A549 (cell line): ENCODE measurements at regions of chr5 and their contacts with region 1.

Region 1: DNA sequence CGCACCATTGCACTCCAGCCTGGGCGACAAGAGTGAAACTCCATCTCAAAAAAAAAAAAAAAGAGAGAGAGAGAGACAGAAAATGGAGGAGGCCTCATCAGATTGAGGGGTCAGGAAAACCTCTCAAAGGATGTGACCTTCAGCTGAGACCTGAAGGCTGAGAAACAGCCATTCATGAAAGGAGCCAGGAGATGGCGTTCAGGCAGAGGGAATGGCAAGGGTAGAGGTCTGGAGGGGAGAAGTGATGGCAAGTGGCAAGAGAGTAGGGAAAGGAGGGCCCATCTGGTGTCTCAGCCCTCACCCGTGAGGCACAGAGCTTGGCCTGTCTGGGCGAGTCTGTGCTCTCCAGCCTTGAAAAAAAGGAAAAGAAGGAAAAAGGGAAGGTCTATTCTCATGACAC is 17.0 kb downstream of the CAMK2A start:
- DNase-seq: peak; percentile 57 to 59
- ATAC-seq: peak; percentile 74 to 91
- H3K4me3 ChIP-seq: no peak overlapping the region
- H3K27ac ChIP-seq: peak overlapping the region in 1 of 2 experiments; percentile 51; a peak in 1 of 6 replicates
- H3K4me1 ChIP-seq: peaks cover 10% of the 10 kb centered on the region; the same call in 2 of the 3 replicates
- CTCF ChIP-seq: peak; percentile 54
- EP300 ChIP-seq: no peak
- POLR2A ChIP-seq: no peak
- RAD21 ChIP-seq: peak; percentile 76 to 92

Region 2: GRCh38 chr5:149824114-149824513 is 448.4 kb before region 1 on chr5:
- CTCF ChIA-PET with region 1: no interaction called
- POLR2A ChIA-PET with region 1: no interaction called
- DNase-seq: no peak
- ATAC-seq: no peak
- H3K4me3 ChIP-seq: no peak overlapping the region
- H3K27ac ChIP-seq: no peak overlapping the region
- H3K4me1 ChIP-seq: peaks cover 5% of the 10 kb centered on the region; the same call in 1 of the 3 replicates
- CTCF ChIP-seq: no peak
- EP300 ChIP-seq: no peak
- POLR2A ChIP-seq: no peak
- RAD21 ChIP-seq: no peak

Region 3: DNA sequence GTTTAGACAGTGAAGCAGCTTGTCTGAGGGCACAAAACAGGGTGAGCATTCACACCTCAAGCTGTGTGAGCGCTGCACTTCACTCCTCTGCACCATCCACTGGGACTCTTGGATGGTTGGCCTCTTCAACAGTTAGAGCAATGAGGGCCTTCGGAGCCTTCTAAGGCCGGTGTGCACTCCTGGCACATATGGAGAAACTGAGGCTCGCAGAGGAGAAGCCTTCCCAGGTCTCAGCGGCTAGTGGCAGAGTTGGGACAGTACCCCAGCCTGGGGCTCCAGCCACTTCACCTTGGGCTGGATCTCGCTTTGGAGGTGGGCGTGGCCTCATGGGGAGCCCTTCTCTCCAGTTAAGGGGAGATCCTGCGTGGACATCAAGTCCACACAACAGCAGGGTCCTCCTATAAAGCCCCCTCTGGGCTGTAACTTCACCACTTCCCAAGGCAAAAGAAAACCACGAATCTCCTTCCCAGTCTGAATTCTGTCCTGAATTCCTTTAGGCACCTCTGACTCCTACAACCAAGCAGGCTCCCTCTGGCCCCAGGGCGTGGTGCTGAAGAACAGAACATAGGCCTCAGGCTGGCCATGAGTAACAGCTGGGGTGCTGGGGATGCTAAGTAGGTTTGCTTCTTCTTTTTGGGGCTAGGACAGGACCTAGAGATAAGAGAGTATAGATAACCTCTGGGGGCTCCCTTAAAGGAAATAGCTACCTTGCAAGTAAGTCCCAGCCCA is 155.7 kb before region 1 on chr5:
- CTCF ChIA-PET with region 1: no interaction called
- POLR2A ChIA-PET with region 1: no interaction called
- DNase-seq: no peak
- ATAC-seq: no peak
- H3K4me3 ChIP-seq: no peak overlapping the region
- H3K27ac ChIP-seq: no peak overlapping the region
- H3K4me1 ChIP-seq: peaks cover 9% of the 10 kb centered on the region
- CTCF ChIP-seq: no peak
- EP300 ChIP-seq: no peak
- POLR2A ChIP-seq: no peak
- RAD21 ChIP-seq: no peak

Region 4: DNA sequence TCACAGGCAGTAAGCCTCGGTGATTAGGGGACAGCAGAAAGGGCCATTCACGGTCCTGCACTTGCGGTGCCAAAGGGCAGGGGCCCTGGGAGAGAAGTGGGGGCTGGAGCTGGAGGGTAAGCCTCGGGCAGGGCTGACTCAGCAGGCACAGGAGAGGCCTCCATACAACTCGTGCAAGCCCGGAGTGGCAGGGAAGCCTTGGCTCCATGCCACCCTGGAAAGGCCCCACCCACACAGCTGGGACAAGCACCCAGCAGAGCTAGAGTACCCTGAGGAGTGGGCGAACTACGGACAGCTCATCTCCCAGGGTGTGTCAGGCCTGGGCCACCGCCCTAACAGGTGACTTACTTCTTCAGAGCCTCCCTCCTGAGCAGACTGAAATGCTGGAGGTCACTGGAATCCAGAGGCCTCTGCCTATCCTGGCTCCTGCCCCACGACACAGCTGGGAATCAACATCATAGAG is 22.7 kb after region 1 on chr5:
- CTCF ChIA-PET with region 1: interaction called, 13 read pairs
- POLR2A ChIA-PET with region 1: no interaction called
- DNase-seq: peak in 1 of 2 experiments; percentile 44
- ATAC-seq: peak; percentile 44 to 67; a peak in 5 of 6 replicates
- H3K4me3 ChIP-seq: no peak overlapping the region
- H3K27ac ChIP-seq: peak overlapping the region; percentile 74 to 87
- H3K4me1 ChIP-seq: peaks cover 49% of the 10 kb centered on the region
- CTCF ChIP-seq: no peak
- EP300 ChIP-seq: no peak
- POLR2A ChIP-seq: no peak
- RAD21 ChIP-seq: no peak

Region 5: GRCh38 chr5:150320048-150320555 is 47.6 kb after region 1 on chr5:
- CTCF ChIA-PET with region 1: interaction called, 12 read pairs
- POLR2A ChIA-PET with region 1: no interaction called
- DNase-seq: peak; percentile 50 to 68
- ATAC-seq: peak; percentile 20 to 32; a peak in 5 of 6 replicates
- H3K4me3 ChIP-seq: no peak overlapping the region
- H3K27ac ChIP-seq: peak overlapping the region; percentile 91 to 97
- H3K4me1 ChIP-seq: peaks cover 60% of the 10 kb centered on the region
- CTCF ChIP-seq: no peak
- EP300 ChIP-seq: peak in 1 of 2 experiments; percentile 23; a peak in 1 of 5 replicates
- POLR2A ChIP-seq: no peak
- RAD21 ChIP-seq: no peak

Region 6: DNA sequence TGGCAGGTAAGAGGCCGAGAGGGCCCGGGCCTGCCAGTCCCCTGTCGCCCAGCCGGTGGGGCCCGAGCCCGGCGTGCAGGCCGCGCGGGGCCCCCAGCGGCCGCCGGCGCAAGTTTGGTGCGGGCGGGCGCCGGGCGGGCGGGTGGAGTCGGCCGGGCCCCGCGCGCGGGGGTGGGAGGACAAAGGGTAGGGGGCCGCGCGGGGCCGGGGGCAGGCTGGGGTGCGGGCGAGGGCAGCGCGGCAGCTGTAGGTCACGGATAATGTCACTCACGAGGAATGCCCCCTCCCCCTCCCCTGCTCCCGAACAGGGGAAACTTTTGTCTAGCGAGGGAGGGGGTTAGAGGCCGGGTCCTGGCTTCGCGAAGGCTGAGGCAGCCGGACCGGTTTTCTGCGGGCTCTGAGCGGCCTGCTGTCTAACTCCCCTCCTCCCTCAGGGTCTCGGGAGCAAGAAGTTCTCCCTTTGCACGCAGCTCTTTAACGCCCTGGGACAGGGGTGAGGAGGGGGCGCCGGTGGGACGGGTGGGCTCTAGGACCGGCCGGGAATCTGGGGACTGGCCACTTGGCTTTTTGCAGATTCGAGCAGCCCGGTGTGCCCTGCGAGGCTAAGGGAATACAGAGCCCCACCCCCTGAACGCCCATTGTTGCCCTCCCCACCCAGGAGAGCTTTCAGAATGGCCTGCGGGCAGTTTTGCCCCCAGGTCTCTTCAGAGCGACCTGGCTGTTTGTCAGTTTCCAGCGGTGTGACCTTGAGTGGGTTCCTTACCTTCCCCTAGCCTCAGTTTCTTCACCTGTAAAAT is 214.1 kb after region 1 on chr5:
- CTCF ChIA-PET with region 1: no interaction called
- POLR2A ChIA-PET with region 1: no interaction called
- DNase-seq: peak; percentile 64 to 70
- ATAC-seq: peak; percentile 54 to 62
- H3K4me3 ChIP-seq: peak overlapping the region; percentile 87
- H3K27ac ChIP-seq: peak overlapping the region; percentile 98 to 100
- H3K4me1 ChIP-seq: peaks cover 53% of the 10 kb centered on the region
- CTCF ChIP-seq: no peak
- EP300 ChIP-seq: no peak
- POLR2A ChIP-seq: no peak
- RAD21 ChIP-seq: no peak; a peak in 1 of 5 replicates

Region 7: GRCh38 chr5:150700594-150701293 is 428.2 kb after region 1 on chr5 and contains the start of gene RBM22:
- CTCF ChIA-PET with region 1: no interaction called
- POLR2A ChIA-PET with region 1: no interaction called
- DNase-seq: peak; percentile 74 to 90
- ATAC-seq: peak; percentile 96 to 98
- H3K4me3 ChIP-seq: peak within 1 kb of the TSS; percentile 97
- H3K27ac ChIP-seq: peak within 1 kb of the TSS; percentile 98 to 99
- H3K4me1 ChIP-seq: peaks cover 14% of the 10 kb centered on the region
- CTCF ChIP-seq: peak; percentile 60
- EP300 ChIP-seq: no peak
- POLR2A ChIP-seq: peak; percentile 80
- RAD21 ChIP-seq: peak in 1 of 2 experiments; percentile 6; a peak in 1 of 5 replicates
- polyA plus RNA-seq, gene RBM22: 65.3 and 75.7 TPM in 2 replicates